ENCODE measurements at regions of chr9 and their contacts with region 1.

Region 1: DNA sequence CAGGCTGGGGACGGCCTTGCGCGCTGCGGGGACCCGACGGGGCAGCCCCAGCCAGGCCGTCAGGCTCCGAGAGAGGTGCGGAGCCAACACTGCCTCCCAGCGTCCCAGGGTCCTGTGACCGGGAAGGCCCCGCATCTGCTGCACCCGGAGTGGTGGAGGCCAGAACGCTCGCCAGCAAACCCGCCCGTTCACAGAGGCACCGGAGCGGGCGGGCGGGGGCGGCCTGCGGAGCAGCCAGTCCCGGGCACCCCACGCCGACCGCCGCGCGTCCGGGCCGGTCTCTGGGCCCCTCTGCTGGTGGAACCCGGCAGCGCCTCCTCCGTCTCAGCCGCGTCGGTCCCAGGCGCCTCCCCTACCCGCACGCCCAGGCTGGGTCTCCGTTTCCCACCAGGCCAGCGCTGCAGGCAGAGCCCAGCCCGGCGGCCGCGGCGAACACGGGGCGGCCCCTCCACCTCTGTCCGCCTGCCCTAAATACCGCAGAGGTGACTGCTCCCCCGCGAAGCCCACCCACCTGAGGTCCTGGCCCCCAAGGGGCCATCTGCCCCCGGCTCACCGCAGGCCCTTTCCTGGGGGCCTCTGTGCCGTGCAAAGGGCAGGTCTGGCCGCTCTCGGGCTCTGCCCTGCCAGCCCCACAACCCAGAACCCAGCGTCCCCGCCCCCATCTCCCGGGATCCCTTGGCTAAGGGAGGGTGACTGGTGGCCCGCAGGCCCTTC is 15.9 kb downstream of the EXD3 start:
- DNase-seq: peak; percentile 85
- ATAC-seq: peak; percentile 89
- H3K4me3 ChIP-seq: peak overlapping the region; percentile 40
- H3K27ac ChIP-seq: peak overlapping the region; percentile 47
- H3K4me1 ChIP-seq: peaks cover 24% of the 10 kb centered on the region
- H3K27me3 ChIP-seq: no peaks in the 10 kb centered on the region
- CTCF ChIP-seq: peak; percentile 71

Region 2: GRCh38 chr9:137295238-137295811 is 111.7 kb before region 1 on chr9:
- intact Hi-C with region 1: loop called (anchors 10 kb)
- DNase-seq: peak; percentile 70
- ATAC-seq: peak; percentile 81
- H3K4me3 ChIP-seq: peak overlapping the region; percentile 45
- H3K27ac ChIP-seq: no peak overlapping the region
- H3K4me1 ChIP-seq: peaks cover 18% of the 10 kb centered on the region
- H3K27me3 ChIP-seq: peaks cover 28% of the 10 kb centered on the region
- CTCF ChIP-seq: peak; percentile 31

Region 3: GRCh38 chr9:137470785-137471184 is 63.8 kb after region 1 on chr9:
- intact Hi-C with region 1: no loop called
- DNase-seq: peak; percentile 25
- ATAC-seq: no peak
- H3K4me3 ChIP-seq: no peak overlapping the region
- H3K27ac ChIP-seq: no peak overlapping the region
- H3K4me1 ChIP-seq: no peaks in the 10 kb centered on the region
- H3K27me3 ChIP-seq: no peaks in the 10 kb centered on the region
- CTCF ChIP-seq: no peak

Measured in upper lobe of right lung (tissue), 1 donor.